GM12878 (cell line): ENCODE measurements at regions of chr6 and their contacts with region 1.

Region 1: DNA sequence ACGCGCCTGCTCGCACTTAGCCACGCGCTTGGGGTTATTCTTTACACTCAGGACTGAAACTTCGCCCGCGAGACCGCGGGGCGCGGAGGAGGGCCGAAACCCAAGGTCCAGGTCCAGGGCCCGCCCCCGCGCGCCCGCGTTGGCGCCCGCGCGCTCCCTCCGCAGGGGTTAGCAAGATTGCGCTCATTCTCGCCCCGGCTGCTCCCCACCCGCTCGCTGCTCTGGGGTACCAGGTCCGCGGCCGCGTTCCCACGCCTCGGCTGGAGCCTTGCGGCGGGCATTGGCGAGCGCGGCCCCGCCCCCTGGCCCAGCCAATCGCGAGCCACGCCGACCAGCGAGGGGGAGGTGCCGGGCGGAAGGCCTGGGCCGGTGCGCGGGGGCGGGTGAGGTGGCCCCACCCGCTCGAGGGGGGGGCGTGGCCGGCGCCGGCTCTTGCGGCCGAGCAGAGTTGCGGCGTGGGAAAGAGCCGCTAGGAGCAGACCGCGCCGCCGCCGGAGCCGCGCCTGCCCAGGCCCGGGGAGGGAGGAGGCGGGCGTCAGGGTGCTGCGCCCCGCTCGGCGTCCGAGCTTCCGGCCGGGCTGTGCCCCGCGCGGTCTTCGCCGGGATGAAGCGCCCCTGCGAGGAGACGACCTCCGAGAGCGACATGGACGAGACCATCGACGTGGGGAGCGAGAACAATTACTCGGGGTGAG is at the start of gene HEY2:
- DNase-seq: peak; percentile 33
- ATAC-seq: peak; percentile 96
- H3K4me3 ChIP-seq: peak within 1 kb of the TSS; percentile 71
- H3K27ac ChIP-seq: no peak within 1 kb of the TSS
- H3K4me1 ChIP-seq: peaks cover 9% of the 10 kb centered on the region
- H3K27me3 ChIP-seq: peaks cover 5 to 6% of the 10 kb centered on the region in 2 experiments; a peak in 3 of 4 replicates
- CTCF ChIP-seq: no peak
- EP300 ChIP-seq: no peak
- POLR2A ChIP-seq: peak; percentile 56; the same call in 1 of the 2 replicates
- RAD21 ChIP-seq: no peak
- polyA plus RNA-seq, gene HEY2: not detected

Region 2: GRCh38 chr6:125153391-125154117 is 595.8 kb before region 1 on chr6 and contains the start of gene TPD52L1:
- CTCF ChIA-PET with region 1: no interaction called
- POLR2A ChIA-PET with region 1: no interaction called
- RAD21 ChIA-PET with region 1: no interaction called
- SMC1A ChIA-PET with region 1: no interaction called
- in situ Hi-C with region 1: loop called (anchors 25 kb)
- intact Hi-C with region 1: no loop called
- DNase-seq: no peak
- ATAC-seq: peak; percentile 99
- H3K4me3 ChIP-seq: no peak within 1 kb of the TSS
- H3K27ac ChIP-seq: no peak within 1 kb of the TSS
- H3K4me1 ChIP-seq: no peaks in the 10 kb centered on the region
- H3K27me3 ChIP-seq: peaks cover 0 to 10% of the 10 kb centered on the region in 2 experiments; a peak in 3 of 4 replicates
- CTCF ChIP-seq: peak; percentile 70 to 93 (median 76)
- EP300 ChIP-seq: no peak
- POLR2A ChIP-seq: no peak
- RAD21 ChIP-seq: peak; percentile 32; the same call in 1 of the 2 replicates
- polyA plus RNA-seq, gene TPD52L1: 0.09 to 0.16 TPM

Region 3: GRCh38 chr6:125670568-125670967 is 78.8 kb before region 1 on chr6:
- CTCF ChIA-PET with region 1: no interaction called
- POLR2A ChIA-PET with region 1: no interaction called
- RAD21 ChIA-PET with region 1: no interaction called
- SMC1A ChIA-PET with region 1: no interaction called
- in situ Hi-C with region 1: no loop called
- intact Hi-C with region 1: no loop called
- DNase-seq: no peak
- ATAC-seq: no peak
- H3K4me3 ChIP-seq: no peak overlapping the region
- H3K27ac ChIP-seq: no peak overlapping the region
- H3K4me1 ChIP-seq: no peaks in the 10 kb centered on the region
- H3K27me3 ChIP-seq: no peaks in the 10 kb centered on the region; a peak in 2 of 4 replicates
- CTCF ChIP-seq: no peak
- EP300 ChIP-seq: no peak
- POLR2A ChIP-seq: no peak
- RAD21 ChIP-seq: no peak

Region 4: DNA sequence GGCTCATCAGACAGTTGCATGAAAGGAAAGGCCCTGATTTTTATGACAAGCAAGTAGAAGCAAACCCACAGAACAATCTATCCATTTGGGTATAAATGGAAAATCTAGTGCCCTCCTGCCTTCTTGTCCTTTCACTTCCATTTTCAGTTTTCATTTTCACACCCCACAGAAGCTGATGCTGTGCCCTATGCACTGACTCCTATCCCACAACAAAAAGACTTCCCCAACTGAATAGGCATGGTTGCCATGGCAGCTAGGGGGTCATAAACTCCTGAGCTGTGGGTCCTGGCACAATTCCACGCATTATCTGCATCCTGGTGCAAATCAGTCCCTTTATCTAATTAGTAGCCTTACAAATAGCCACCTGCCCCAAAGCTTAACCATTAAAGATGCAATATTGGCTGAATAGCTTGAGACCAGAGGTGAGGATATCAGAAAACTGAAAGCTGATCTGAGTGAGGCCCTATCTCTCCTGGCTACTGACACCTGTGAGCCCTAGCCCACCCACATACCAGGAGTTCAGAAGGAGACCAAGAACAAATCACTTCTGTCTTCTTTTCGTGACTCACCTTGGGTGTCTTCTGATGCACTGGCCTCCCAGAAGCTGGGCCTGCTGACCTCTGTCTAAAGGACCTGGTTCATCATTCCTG is 34.8 kb before region 1 on chr6:
- CTCF ChIA-PET with region 1: interaction called, 12 read pairs
- POLR2A ChIA-PET with region 1: no interaction called
- RAD21 ChIA-PET with region 1: interaction called, 6 read pairs
- SMC1A ChIA-PET with region 1: interaction called, 12 read pairs
- in situ Hi-C with region 1: no loop called
- intact Hi-C with region 1: loop called (anchors 2 kb)
- DNase-seq: peak; percentile 55
- ATAC-seq: peak; percentile 83
- H3K4me3 ChIP-seq: no peak overlapping the region
- H3K27ac ChIP-seq: no peak overlapping the region
- H3K4me1 ChIP-seq: peaks cover 28% of the 10 kb centered on the region
- H3K27me3 ChIP-seq: no peaks in the 10 kb centered on the region
- CTCF ChIP-seq: no peak
- EP300 ChIP-seq: 0 out of 4 replicates have a peak, but pooled peaks of 1 of the 2 experiments have one; percentile 32
- POLR2A ChIP-seq: no peak
- RAD21 ChIP-seq: no peak

Region 5: GRCh38 chr6:125974214-125974866 is 225.0 kb after region 1 on chr6:
- CTCF ChIA-PET with region 1: interaction called, 10 read pairs
- POLR2A ChIA-PET with region 1: no interaction called
- RAD21 ChIA-PET with region 1: interaction called, 3 read pairs
- SMC1A ChIA-PET with region 1: interaction called, 10 read pairs
- in situ Hi-C with region 1: no loop called
- intact Hi-C with region 1: no loop called
- DNase-seq: no peak
- ATAC-seq: peak; percentile 93
- H3K4me3 ChIP-seq: no peak overlapping the region
- H3K27ac ChIP-seq: no peak overlapping the region
- H3K4me1 ChIP-seq: no peaks in the 10 kb centered on the region
- H3K27me3 ChIP-seq: no peaks in the 10 kb centered on the region
- CTCF ChIP-seq: peak; percentile 21 to 57 (median 49); a peak in 3 of 6 replicates
- EP300 ChIP-seq: no peak
- POLR2A ChIP-seq: no peak
- RAD21 ChIP-seq: peak; percentile 48